ENCODE measurements at regions of chr12 and their contacts with region 1.

Region 1: GRCh38 chr12:47715393-47715876 is 9.6 kb upstream of the RPAP3 start:
- DNase-seq: peak; percentile 77
- CTCF ChIP-seq: peak; percentile 83

Region 2: GRCh38 chr12:47194501-47194900 is 520.9 kb before region 1 on chr12:
- CTCF ChIA-PET with region 1: no interaction called
- POLR2A ChIA-PET with region 1: no interaction called
- DNase-seq: no peak
- CTCF ChIP-seq: no peak

Region 3: DNA sequence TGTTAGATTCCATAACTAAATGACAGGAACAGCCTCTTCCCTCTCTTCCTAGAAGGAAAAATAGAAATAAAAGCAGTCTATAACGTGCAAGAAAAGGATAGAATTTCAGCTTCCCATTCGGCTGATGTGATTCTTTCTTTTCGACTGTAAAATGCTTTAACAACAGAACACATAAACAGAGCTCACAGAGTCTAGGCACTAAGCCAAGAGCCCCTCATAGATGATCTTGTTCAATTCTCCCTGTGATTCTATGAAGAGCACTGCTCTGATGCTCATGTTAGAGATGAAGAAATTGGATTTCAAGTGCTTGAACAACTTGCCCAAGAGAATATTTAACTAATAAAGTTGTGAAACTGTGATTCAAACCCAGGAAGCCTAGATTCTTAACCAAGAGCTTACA is 242.3 kb before region 1 on chr12:
- CTCF ChIA-PET with region 1: no interaction called
- POLR2A ChIA-PET with region 1: no interaction called
- DNase-seq: no peak
- CTCF ChIP-seq: no peak

Region 4: GRCh38 chr12:47561746-47562145 is 153.7 kb before region 1 on chr12:
- CTCF ChIA-PET with region 1: no interaction called
- POLR2A ChIA-PET with region 1: no interaction called
- DNase-seq: no peak
- CTCF ChIP-seq: no peak

Region 5: GRCh38 chr12:47725893-47726292 is 10.5 kb after region 1 on chr12:
- CTCF ChIA-PET with region 1: interaction called, 125 read pairs
- POLR2A ChIA-PET with region 1: no interaction called
- DNase-seq: peak; percentile 67
- CTCF ChIP-seq: no peak

Region 6: DNA sequence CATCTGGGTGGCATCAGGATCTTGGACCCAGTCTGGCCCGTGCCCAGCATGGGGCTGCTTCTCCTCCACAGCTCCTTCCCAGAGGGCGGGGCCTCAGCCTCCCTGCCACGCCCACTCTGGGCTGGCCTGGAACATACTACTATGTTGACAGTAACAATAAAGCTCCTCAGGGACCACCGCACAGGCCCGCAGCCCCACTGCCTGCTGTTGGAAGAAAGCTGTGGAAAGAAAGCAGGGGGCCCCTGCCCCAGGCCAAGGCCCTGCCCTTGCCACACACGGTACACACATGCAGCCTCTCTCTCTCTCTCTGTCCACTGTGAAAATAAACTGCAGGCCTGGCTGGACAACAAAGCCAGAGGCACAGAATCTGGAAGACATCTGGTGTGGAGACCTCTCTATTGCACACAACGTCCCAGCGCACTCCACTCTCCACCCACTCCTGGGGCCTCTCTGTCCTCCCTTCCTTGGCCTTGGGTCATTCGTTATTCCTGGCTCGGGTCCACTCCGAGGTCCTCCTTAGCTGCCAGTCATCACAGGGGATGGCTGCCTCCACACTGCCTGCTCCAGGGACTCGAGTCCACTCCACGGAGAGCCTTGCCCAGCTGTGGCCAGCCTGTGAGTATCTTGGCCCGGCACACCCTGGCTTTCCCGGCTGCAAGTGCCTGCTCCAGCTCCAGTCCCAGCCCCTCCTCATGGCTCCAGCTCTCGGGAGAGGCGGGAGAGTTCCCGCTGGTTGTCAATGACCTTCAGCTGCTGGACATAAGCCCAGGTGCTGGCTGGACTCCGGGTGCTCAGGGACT is 21.6 kb after region 1 on chr12:
- CTCF ChIA-PET with region 1: interaction called, 225 read pairs
- POLR2A ChIA-PET with region 1: interaction called, 4 read pairs
- DNase-seq: no peak
- CTCF ChIP-seq: no peak

Region 7: DNA sequence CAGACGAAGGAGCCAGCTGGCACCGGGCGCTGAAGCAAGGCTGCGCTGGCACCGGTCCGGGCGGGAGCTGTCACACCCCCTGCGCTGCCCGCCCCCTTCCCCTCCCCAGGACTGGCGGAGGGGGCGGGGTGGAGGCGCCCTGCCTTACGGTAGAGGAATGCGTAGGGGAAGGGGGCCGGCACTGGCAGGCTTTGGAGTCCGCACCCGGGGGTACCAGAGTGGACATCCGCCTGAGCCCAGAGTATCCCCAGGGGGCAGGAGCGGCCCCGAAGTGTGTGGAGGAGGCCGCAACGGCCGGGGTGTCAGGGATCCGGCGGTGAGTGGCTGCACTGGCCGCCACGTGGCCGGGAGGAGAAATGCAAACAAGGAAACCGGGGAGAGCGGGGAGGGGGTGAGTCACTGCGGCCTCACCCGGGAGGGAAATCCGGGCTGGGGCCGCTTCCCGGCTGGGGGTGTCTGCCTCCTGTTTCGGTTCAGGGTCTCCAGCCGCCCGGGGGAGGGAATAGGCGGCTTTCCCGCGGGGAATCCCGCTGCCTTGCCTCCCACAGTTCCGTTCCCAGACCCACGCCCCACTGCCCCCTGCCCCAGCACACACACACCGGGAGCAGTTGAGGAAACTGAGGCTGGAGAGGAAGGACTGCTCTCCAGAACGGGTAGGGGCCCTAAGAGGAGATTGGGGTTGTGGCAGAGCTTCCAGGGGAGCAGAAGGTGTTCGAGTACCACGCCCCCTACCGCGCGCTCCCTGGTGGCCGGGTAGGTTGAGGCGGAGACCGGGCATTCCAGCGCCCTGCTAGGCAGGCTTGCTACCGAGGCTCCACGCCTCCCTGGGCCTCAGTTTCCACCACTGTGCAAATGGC is 43.6 kb after region 1 on chr12 and contains the start of gene RAPGEF3:
- CTCF ChIA-PET with region 1: interaction called, 117 read pairs
- POLR2A ChIA-PET with region 1: no interaction called
- DNase-seq: peak; percentile 86
- CTCF ChIP-seq: peak; percentile 68

Region 8: DNA sequence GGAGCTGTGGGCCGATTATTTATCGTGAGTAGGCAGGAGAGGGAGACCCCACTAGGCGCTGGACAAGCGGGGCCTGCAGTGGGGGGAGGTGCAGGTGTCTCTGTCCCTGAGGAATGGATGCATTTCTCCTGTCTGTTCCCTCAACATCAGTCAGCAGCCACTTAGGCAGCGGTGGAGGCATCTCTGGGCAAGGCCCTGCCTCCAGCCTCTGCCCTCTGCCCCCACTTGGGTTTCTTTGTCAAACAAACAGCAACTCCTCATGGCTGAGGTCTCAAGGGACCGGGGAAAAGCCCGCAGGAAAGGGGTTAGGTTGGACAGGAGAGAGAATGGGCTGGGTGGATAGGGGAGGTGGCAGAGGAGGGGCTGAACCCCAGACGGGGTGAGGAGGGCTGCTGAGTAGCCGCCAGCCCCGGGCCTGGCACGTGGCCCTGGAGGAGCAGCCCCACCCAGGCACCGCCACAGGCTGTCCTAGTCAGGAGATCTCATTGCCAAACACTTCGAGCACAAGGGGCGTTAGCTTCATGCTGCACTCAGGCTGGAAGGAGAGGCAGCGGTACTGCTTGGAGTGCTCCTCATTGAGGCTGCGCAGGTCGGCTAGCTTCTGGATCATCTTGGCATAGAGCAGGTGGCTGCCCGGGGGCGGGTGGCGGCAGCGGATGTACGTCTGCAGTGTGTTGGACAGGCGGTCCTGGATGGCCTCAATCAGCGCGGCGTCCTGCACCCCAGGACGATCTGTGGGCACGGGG is 129.0 kb after region 1 on chr12:
- CTCF ChIA-PET with region 1: interaction called, 33 read pairs
- POLR2A ChIA-PET with region 1: no interaction called
- DNase-seq: no peak
- CTCF ChIP-seq: no peak

Region 9: DNA sequence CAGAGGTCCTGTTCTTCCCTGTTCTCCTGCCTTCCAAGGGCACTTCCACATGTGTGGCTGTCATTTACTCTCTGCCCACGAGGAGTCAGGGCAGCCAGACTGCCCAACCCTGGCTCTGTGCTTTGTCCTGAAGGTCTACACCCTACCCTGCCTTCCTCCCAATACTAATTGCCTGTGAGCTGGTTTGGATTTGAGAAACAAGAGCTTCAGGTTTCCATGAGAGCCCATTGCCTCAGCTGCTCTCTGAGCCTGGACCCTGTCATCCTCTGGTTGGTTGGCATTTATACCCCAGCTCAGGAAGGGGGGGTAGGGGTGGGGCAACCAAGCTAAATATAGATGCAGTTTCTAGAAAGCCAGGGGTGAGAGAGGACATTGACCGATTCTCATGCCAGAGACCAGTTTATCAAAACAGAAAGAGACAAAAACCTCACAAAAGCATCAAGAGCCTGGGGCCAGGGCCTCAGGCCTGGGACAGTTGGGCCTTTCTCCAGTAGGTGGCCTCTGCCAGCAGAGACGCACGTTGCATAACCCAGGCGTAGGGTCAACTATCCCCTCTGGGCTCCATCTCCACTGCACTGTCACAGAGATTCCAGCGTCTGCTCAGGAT is 154.8 kb after region 1 on chr12:
- CTCF ChIA-PET with region 1: no interaction called
- POLR2A ChIA-PET with region 1: no interaction called
- DNase-seq: no peak
- CTCF ChIP-seq: peak; percentile 46